Mammary epithelial cell (primary cell): ENCODE measurements at regions of chr9 and their contacts with region 1.

Region 1: DNA sequence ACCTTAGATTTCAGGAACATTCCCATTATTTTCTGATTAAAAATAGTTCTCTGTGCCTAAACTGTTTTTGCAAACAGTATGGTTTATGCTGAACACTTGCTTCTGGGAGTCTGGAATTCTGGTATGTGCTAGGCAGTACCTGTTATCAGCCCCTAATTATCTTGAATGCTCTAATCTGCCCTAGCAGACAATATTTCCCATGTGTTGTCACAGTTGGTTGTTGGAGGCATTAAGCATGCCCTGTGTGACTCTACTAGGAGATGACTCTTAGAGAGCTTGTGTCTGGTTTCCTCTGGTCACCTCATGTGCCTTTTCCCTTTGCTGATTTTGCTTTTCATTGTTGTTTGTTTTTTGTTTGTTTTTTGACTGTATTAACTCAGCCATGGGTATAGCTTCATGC is 36.6 kb downstream of the UHRF2 start:
- DNase-seq: no peak
- H3K4me3 ChIP-seq: no peak overlapping the region
- H3K27ac ChIP-seq: no peak overlapping the region
- H3K4me1 ChIP-seq: peaks cover 9% of the 10 kb centered on the region
- H3K27me3 ChIP-seq: no peaks in the 10 kb centered on the region
- CTCF ChIP-seq: no peak

Region 2: DNA sequence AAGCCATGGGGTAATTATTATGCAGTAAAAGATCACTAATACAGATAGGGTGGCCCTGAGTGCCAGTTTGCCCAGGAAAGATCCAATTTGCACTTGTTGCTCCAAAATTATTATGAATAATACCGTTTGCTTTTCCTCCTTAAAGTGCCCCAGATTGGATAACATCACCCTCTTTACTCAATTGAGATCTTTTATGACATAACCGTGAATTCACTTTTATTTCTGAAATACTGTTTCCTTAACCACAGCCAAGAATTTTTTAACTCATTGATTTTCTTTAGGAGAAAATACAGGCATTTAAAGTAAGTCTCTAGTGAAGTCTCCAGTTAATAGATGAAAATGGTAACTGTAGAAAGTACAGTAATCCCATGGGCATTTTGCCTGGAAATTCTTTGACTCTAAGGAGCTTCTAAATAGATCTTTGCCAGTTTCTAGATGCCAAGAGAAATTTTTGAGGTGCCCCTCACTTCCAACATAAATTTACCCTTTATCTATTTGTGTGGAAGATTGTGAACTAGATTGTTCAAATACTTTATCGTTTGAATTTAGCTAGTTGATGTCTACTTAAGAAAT is 62.5 kb after region 1 on chr9:
- CTCF ChIA-PET with region 1: no interaction called
- dilution Hi-C with region 1: loop called (anchors 10 kb)
- in situ Hi-C with region 1: no loop called
- intact Hi-C with region 1: no loop called
- DNase-seq: no peak
- H3K4me3 ChIP-seq: no peak overlapping the region
- H3K27ac ChIP-seq: no peak overlapping the region
- H3K4me1 ChIP-seq: peaks cover 7% of the 10 kb centered on the region
- H3K27me3 ChIP-seq: no peaks in the 10 kb centered on the region
- CTCF ChIP-seq: no peak